ENCODE measurements at regions of chr17 and their contacts with region 1.

Region 1: DNA sequence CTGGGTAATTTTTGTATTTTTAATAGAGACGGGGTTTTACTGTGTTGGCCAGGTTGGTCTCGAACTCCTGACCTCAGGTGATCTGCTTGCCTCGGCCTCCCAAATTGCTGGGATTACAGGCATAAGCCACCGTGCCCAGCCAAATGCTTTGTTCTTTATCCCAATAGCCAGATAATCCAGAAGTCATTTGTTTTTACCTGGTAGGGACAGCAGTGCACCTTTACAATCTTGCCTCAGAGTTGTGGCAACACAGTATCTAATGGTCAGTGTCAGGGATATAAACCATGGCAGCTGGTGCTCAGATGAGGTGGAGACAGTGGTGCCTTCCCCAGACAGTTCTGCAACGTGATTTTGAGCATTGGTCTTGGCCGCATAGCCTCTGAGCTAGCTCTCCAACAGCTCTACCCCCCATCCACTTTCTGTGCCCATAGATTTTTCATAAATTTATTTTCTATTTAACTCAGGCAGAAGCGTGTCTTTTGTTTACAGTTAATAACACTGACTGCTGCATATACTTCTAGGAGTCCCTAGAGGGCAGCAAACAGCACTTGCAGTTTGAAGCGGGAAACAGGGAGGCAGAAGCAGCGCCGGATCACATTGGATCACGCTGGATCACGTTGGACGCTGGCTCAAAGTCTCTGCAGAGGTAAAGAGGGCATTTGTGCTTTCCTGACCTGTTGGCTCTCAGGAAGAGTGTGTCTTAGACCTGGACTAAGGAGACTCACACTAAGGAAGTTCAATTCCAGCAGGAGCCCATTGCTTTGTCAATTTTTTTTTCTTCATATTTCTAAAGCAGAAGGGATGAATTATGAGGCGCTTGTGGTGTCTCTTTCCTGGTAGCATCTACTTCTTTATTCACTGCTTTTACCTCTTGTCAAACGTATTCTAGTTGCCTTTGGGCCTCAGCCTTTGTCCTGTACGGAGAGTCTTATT is 5.1 kb upstream of the GGT6 start:
- DNase-seq: peak; percentile 68 to 86 (median 84)
- H3K4me3 ChIP-seq: peak overlapping the region in 1 of 7 experiments; percentile 43
- H3K27ac ChIP-seq: no peak overlapping the region
- H3K4me1 ChIP-seq: peaks cover 2 to 21% (median 8%) of the 10 kb centered on the region in 4 experiments
- H3K27me3 ChIP-seq: no peaks in the 10 kb centered on the region

Region 2: DNA sequence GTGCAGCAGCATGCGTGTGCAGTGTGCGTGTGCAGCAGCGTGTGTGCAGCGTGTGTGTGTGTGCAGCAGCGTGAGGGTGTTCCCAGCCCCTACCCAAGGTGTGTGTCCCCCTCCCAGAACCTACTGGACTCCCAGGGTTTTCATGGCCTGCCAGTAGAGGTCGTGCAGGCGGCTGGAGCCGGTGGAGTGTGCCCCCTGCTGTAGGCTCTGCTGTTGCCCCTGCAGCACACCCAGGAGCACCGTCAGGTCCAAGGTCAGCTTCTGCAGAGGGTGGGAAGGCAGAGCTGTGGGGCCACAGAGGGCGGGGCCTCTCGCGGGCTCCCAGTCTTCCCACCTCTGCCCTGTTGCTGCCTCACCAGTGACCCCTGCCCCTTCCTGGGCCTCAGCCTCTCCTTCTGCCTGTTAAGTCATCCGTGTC is 25.2 kb before region 1 on chr17:
- CTCF ChIA-PET with region 1: interaction called, 19 read pairs
- POLR2A ChIA-PET with region 1: no interaction called
- DNase-seq: peak; percentile 49 to 57 (median 57)
- H3K4me3 ChIP-seq: no peak overlapping the region
- H3K27ac ChIP-seq: peak overlapping the region in 1 of 2 experiments; percentile 5
- H3K4me1 ChIP-seq: peaks cover 0 to 48% (median 23%) of the 10 kb centered on the region in 4 experiments
- H3K27me3 ChIP-seq: no peaks in the 10 kb centered on the region

Region 3: DNA sequence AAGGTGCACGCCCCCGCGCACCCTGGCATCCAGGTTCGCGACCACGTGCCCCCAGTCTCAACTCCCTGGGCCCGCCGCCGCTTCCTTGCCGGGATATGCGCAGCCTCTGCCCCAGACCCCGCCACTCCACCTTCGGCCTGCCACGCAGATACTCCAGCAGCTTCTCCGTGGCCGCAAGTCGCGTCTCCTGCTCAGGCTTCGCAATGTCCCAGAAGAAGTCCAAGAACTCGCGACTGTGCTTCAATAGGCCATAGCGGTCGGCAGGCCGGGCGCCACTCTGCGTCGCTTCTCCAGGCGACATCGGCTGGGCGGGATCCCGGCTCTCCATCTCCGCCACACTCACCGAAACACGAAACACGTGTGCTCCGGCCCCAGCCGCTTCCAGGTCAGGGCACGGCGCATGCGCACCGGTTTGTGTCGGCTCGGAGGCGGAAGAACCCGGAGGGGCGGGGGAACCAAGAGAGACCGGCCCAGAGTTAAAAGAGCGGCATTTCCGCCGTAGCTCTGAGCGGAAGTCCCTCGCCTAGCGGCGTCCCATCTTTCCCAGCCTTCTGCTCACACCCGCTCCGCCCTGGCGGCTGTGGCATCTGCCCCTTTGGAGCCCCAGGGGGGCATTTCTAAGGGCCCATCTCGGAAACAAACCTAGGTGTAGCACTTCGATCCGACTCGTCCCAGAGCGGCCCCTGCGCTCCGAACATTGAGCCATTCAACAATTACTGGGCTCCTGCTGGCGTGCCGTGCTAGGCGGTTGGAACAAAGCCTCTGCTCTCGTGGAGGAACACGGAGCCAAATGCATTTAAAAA is 10.3 kb before region 1 on chr17 and contains the start of gene MYBBP1A:
- CTCF ChIA-PET with region 1: interaction called, 36 read pairs
- POLR2A ChIA-PET with region 1: no interaction called
- DNase-seq: peak; percentile 94 to 96 (median 94)
- H3K4me3 ChIP-seq: peak within 1 kb of the TSS; percentile 79 to 97 (median 85)
- H3K27ac ChIP-seq: peak within 1 kb of the TSS; percentile 50 to 88
- H3K4me1 ChIP-seq: peaks cover 0 to 26% (median 24%) of the 10 kb centered on the region in 4 experiments
- H3K27me3 ChIP-seq: no peaks in the 10 kb centered on the region

Region 4: GRCh38 chr17:4583782-4584100 is 18.3 kb after region 1 on chr17:
- CTCF ChIA-PET with region 1: interaction called, 18 read pairs
- POLR2A ChIA-PET with region 1: no interaction called
- DNase-seq: peak; percentile 56 to 73 (median 70)
- H3K4me3 ChIP-seq: peak overlapping the region in 6 of 7 experiments; percentile 36 to 76 (median 58)
- H3K27ac ChIP-seq: no peak overlapping the region
- H3K4me1 ChIP-seq: peaks cover 0 to 20% (median 15%) of the 10 kb centered on the region in 4 experiments
- H3K27me3 ChIP-seq: peaks cover 0 to 58% (median 33%) of the 10 kb centered on the region in 5 experiments

Region 5: GRCh38 chr17:4594931-4595684 is 29.6 kb after region 1 on chr17:
- CTCF ChIA-PET with region 1: interaction called, 10 read pairs
- POLR2A ChIA-PET with region 1: no interaction called
- DNase-seq: peak; percentile 66 to 81 (median 79)
- H3K4me3 ChIP-seq: peak overlapping the region in 1 of 7 experiments; percentile 38
- H3K27ac ChIP-seq: no peak overlapping the region
- H3K4me1 ChIP-seq: peaks cover 0 to 7% (median 2%) of the 10 kb centered on the region in 4 experiments
- H3K27me3 ChIP-seq: peaks cover 0 to 4% (median 0%) of the 10 kb centered on the region in 5 experiments

Region 6: GRCh38 chr17:4625181-4625617 is 59.7 kb after region 1 on chr17:
- CTCF ChIA-PET with region 1: interaction called, 62 read pairs
- POLR2A ChIA-PET with region 1: no interaction called
- DNase-seq: no peak
- H3K4me3 ChIP-seq: no peak overlapping the region
- H3K27ac ChIP-seq: no peak overlapping the region
- H3K4me1 ChIP-seq: no peaks in the 10 kb centered on the region
- H3K27me3 ChIP-seq: peaks cover 0 to 3% (median 0%) of the 10 kb centered on the region in 5 experiments

Region 7: DNA sequence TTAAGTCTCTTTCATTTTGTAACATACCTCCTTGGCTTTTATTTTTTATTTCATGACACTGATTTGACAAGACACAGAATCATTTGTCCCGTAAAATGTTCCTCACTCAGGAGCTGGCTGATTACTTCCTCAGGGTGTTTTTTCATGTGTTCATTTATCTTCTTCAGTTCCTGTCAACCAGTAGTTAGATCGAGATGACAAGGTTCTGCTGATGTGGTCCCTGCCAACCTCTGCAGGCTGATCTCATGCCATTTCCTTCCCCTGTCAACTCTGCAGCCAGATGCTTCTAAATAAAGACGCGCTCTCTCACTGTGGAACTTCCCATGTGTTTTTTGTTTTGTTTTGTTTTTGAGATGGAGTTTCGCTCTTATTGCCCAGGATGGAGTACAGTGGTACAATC is 182.4 kb after region 1 on chr17:
- CTCF ChIA-PET with region 1: no interaction called
- POLR2A ChIA-PET with region 1: no interaction called
- DNase-seq: peak; percentile 53 to 87 (median 85)
- H3K4me3 ChIP-seq: peak overlapping the region in 5 of 7 experiments; percentile 7 to 66 (median 22)
- H3K27ac ChIP-seq: no peak overlapping the region
- H3K4me1 ChIP-seq: peaks cover 5 to 25% (median 20%) of the 10 kb centered on the region in 4 experiments
- H3K27me3 ChIP-seq: peaks cover 0 to 20% (median 16%) of the 10 kb centered on the region in 5 experiments